AG04449 (cell line): ENCODE measurements at regions of chr1 and their contacts with region 1.

Region 1: DNA sequence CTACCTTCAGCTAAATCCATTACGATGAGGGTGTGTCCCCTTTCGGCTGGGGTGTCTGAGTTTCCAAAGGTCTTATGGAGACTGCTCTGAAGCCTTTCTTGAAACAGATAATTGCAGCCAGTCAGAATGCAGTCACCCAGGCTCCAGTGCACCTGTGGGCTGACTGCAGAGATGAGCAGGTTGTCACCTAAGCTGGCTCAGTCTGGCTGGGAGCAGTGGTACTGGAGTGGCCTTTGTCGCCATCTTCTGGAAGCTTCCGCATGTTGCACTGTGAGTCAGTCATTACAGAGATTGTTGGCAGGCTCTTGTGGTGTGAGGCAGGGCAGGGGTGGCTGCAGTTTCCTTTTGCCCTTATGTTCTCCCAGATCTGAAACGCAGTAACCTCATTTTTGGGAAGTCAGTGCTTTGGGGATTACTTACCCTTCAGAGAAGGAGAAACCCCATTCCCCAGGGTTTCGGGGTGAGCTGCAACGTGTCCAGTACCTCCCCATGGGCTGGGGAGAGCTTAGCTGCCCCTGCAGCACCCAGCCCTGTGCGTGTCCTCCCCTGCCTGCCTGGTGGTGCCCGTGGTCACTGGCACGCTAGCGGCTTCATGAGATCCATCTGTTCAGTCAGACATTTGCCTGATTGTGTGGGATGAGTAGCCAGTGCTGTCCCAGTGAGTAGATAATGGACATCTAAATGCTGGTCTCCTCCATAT is 48.0 kb downstream of the SMYD2 start:
- DNase-seq: no peak
- H3K4me3 ChIP-seq: no peak overlapping the region
- CTCF ChIP-seq: peak; percentile 92

Region 2: DNA sequence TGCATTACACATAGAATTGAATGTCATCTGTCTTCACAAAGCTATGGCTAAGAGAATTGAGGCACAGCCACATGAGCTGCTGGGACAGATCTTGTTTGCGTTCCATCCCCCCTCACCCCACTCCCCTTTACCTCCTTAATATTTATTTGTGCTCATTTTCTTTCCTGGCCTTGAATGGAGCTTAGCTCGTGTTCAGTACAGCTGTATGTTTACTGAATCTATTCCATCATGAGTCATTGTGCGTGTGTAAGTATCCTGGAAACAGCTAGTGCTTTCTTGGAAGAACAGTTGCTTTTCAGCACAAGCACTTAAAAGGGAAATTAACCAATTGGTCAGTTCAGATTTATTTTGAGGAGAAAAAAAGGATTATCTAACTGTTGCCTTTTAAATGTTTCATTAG is 326.4 kb before region 1 on chr1:
- CTCF ChIA-PET with region 1: no interaction called
- POLR2A ChIA-PET with region 1: no interaction called
- DNase-seq: no peak
- H3K4me3 ChIP-seq: no peak overlapping the region
- CTCF ChIP-seq: no peak

Region 3: DNA sequence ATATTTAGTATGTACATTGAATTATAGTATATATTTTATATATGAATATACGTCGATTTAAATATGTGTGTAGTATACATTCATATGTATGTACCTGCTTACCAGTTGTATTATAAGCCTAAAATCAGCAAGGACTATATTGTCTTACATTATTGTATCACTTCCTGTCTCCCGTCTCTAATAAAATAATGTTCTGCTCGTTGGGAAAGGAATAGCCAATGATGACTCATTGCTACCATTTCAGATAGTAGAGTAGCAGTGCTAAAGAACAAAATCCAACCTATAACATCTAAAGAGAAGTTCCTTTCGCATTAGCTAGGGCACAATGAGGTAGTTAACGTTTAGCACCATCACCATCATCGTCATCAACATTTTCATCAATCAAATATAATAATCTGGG is 87.9 kb before region 1 on chr1:
- CTCF ChIA-PET with region 1: interaction called, 12 read pairs
- POLR2A ChIA-PET with region 1: no interaction called
- DNase-seq: no peak
- H3K4me3 ChIP-seq: no peak overlapping the region
- CTCF ChIP-seq: no peak

Region 4: DNA sequence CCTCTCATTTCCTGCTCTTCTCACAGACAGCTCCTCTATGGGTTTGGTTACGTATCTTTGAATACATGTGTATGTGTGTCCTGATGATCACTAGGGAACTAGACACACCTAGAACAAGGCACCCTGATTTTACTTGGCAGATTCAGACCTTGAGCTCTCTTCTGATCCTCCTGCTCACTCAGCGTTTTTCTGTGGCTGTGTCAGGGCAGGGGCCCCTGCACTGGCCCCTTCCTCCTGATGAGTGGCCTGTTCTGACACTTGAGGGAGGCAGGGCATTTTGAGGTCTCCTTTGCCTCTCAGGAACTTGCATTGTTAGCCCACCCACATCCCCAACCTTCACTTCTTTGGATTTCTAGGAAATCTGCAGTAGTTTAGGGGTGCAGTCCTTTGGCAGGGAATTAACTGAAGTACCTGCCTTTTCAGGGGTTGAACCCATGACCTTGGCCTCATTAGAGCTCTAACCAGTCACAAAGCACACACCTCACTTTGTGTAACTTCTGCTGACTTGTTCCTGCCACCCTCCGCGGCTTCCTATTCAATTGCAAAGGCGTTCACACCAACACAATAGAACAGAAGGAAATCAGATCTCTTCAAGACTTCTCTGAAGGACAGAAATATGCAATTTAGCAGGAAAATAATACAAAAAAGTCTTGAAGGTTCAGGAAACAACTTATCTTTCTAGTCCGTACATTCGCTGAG is 39.2 kb before region 1 on chr1:
- CTCF ChIA-PET with region 1: interaction called, 20 read pairs
- POLR2A ChIA-PET with region 1: no interaction called
- DNase-seq: no peak
- H3K4me3 ChIP-seq: no peak overlapping the region
- CTCF ChIP-seq: no peak

Region 5: GRCh38 chr1:214397497-214397896 is 68.6 kb after region 1 on chr1:
- CTCF ChIA-PET with region 1: interaction called, 15 read pairs
- POLR2A ChIA-PET with region 1: no interaction called
- DNase-seq: no peak
- H3K4me3 ChIP-seq: no peak overlapping the region
- CTCF ChIP-seq: no peak

Region 6: DNA sequence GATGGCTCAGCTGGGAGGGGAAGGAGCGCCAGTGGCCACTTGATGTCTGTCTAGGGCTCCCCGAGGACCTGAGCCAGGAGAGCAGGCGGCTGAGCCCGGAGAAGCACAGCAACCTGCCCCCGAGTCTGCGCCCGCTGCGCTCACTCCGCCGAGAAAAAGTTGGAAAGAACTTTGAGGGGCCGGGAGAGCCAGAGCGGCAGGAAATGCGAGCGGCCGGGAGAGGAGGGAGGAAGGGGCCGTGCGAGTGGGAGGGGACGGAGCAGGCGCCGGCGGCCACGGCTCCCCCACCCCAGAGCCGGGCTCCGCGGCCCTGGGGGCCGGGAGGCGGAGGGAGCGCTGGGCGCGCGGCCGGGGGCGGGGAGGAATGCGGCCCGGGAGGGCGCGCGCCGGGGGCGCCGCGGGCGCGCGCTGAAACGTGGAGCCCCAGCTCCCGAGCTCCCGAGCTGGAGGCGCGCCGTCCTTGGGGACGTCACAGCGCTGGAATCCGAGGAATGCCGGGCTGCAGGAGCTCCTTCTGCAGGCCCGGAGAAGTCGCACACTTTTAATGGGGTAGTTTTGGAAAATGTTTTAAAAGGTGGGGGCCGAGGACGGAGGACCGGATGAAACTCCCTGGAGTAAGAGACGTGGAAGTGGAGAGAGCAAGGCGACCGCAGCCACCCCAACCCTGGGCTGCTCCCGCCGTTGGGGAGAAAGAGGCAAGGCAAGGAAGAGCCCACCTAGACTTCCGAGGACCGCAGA is 222.7 kb after region 1 on chr1 and contains the start of gene PTPN14:
- CTCF ChIA-PET with region 1: interaction called, 26 read pairs
- POLR2A ChIA-PET with region 1: no interaction called
- DNase-seq: peak; percentile 67
- H3K4me3 ChIP-seq: peak within 1 kb of the TSS; percentile 86
- CTCF ChIP-seq: peak; percentile 55

Region 7: GRCh38 chr1:214615871-214616270 is 287.0 kb after region 1 on chr1:
- CTCF ChIA-PET with region 1: interaction called, 289 read pairs
- POLR2A ChIA-PET with region 1: no interaction called
- DNase-seq: no peak
- H3K4me3 ChIP-seq: no peak overlapping the region
- CTCF ChIP-seq: no peak